ENCODE measurements at regions of chr12 and their contacts with region 1.

Region 1: DNA sequence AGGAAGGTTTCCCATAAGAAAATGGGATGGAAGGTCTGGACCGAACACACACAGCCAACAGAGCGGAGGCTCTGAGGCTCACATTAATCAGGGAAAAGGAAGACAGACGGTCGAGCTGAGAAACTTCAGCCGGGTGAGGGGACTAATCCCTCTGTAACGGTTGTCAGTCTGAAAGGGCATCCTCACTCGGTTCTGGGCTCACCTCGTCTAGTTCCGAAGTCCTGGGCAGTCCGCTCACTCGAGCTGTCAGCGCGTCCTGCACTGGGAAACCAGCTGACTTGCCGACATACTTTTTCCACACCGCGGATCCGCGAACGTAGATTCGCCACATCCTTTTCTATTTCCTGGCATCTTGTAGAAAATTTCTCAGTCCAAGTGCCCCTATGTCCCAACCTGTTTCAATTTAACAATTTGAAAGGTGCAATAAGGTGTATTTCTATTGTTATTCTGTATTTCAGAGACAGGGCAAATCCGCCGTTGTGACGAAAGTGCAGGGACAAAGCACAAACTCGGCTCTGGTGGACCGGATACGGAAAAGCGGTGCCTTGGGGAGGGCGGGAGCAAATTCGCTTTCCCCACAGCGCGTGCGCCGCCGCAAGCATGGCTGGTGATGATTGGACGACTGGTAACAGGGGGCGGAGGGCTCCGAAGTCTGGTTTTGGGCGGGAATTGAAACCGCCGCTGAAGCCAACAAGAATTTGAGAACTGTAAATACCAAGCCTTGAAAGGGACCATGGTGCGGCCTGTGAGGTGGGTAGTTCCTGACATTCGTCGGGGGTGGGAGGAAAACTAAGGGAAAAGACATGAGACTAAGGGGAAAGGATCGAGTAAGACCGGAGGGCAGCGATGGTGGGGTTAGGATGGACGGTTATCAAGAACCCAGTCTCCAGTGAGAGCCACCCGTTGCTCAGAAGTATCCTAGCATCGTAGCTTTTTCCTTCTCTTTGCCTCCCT is at the start of gene RAD51AP1:
- DNase-seq: peak; percentile 98
- H3K4me3 ChIP-seq: peak within 1 kb of the TSS; percentile 76 to 99 (median 97)
- H3K27ac ChIP-seq: peak within 1 kb of the TSS; percentile 98
- H3K4me1 ChIP-seq: peaks cover 23% of the 10 kb centered on the region
- H3K27me3 ChIP-seq: no peaks in the 10 kb centered on the region
- CTCF ChIP-seq: no peak
- POLR2A ChIP-seq: peak; percentile 18
- total RNA-seq, gene RAD51AP1: 23.1 and 23.4 TPM in 2 replicates

Region 2: DNA sequence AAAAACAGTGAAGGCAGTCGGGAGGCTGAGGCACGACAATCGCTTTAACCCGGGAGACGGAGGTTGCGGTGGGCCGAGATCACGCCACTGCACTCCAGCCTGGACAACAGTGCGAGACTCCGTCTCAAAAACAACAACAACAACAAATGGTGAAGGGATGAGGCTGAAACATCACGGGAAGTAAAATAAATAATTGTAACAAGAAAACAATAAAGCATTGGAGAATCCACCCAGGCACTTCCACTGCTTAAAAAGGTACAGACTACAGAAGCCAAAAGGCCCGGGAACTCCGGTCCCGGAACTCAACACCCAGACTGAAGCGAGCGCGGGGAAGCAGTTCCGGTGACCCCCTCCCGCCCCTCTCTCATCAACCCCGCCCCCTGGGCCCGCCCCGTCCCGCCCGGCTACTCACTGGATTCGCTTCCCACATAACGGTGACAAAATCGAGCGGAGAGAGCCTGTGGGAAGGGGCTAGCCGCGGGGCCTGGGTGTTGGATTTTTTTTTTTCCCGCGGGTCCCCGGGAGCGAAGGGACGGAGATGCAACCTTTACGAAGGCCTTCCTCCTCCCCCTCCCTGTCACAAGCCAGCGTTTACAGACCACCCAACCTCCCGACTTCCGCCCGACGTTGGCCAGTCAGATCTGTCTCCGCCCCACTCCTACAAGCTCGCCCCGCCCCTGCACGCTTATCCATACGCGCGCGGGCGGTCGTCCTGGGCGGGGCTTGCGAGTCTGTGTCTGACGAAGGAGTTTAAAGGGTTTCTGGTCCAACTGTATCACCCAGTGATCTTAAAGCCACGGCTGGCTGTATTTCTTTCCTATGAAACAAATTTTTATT is 665.5 kb before region 1 on chr12 and contains the start of gene PARP11:
- CTCF ChIA-PET with region 1: no interaction called
- POLR2A ChIA-PET with region 1: no interaction called
- dilution Hi-C with region 1: no loop called
- intact Hi-C with region 1: loop called (anchors 5 kb)
- DNase-seq: peak; percentile 96
- H3K4me3 ChIP-seq: peak within 1 kb of the TSS; percentile 57 to 96 (median 86)
- H3K27ac ChIP-seq: peak within 1 kb of the TSS; percentile 64
- H3K4me1 ChIP-seq: peaks cover 13% of the 10 kb centered on the region
- H3K27me3 ChIP-seq: peaks cover 5 to 6% of the 10 kb centered on the region in 2 experiments
- CTCF ChIP-seq: no peak
- POLR2A ChIP-seq: peak; percentile 83
- total RNA-seq, gene PARP11: 4.9 and 6.3 TPM in 2 replicates

Region 3: DNA sequence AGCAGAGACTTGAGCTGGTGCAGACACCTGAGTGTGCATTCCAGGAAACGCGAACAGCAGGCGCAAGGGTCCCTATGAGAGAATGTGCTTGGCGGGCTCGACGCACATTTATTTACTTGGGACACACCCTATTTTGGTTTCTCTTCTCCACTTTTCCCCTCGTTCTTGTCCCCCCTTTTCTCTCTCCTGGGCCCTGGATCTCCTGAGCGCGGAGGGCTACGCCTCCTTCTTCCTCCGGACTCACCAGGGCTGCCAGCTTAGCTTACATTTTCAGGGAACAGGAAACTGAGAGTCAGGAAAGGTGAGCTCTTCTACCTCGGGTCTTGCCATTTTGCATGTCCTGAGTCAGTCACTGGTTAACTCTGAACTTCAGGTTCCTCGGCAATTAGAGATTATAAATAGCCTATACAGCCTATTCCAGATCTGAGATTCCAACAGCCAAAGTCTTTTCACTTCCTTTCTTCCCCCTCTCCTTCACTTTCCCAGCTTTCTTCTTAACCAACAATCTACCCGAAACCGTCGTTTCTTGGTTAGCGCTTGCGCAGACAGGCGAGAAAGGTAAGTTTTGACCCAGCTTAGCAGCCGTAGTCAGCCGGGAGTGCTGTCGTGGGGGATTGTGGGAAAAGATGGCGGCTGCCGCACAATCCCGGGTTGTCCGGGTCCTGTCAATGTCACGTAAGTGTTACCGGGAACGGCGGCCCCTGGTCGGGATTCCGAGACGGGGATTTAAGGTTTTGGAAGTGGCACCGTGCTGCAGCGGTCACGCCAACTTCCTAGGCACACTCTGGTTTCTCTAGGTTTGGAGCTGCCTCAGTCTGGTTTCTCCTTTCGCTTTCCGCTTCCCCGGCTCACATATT is 110.2 kb after region 1 on chr12 and contains the starts of genes AKAP3 and NDUFA9:
- CTCF ChIA-PET with region 1: no interaction called
- POLR2A ChIA-PET with region 1: no interaction called
- dilution Hi-C with region 1: no loop called
- intact Hi-C with region 1: loop called (anchors 1 kb)
- DNase-seq: peak; percentile 93
- H3K4me3 ChIP-seq: peak within 1 kb of the TSS; percentile 58 to 97 (median 96)
- H3K27ac ChIP-seq: peak within 1 kb of the TSS; percentile 79
- H3K4me1 ChIP-seq: peaks cover 16% of the 10 kb centered on the region
- H3K27me3 ChIP-seq: no peaks in the 10 kb centered on the region
- CTCF ChIP-seq: no peak
- POLR2A ChIP-seq: peak; percentile 73
- total RNA-seq, gene AKAP3: 0.62 TPM in 1 of 2 replicates, not detected in the other
- total RNA-seq, gene NDUFA9: 113 and 115 TPM in 2 replicates

Region 4: DNA sequence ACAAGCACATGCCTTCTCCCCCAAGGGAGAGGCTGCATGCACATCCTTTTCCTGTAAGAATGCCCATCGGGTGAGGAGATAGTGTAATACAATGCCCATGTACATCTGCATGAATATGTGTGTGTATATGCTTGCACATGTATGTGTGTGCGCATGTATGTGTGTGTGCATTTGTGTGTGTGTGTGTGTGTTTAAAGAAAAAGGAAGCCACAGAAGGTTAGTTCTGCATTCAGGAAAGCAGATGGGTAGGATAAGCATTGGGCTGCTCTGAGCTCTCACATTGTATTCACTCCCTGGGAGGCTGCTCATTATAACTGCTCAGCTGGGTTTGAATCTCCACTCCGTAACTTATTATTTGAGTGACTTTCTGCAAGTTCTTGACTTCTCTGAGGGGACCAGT is 256.0 kb after region 1 on chr12:
- CTCF ChIA-PET with region 1: no interaction called
- POLR2A ChIA-PET with region 1: no interaction called
- dilution Hi-C with region 1: no loop called
- intact Hi-C with region 1: no loop called
- DNase-seq: no peak
- H3K4me3 ChIP-seq: no peak overlapping the region
- H3K27ac ChIP-seq: no peak overlapping the region
- H3K4me1 ChIP-seq: no peaks in the 10 kb centered on the region
- H3K27me3 ChIP-seq: no peaks in the 10 kb centered on the region
- CTCF ChIP-seq: no peak
- POLR2A ChIP-seq: no peak